ENCODE measurements at regions of chr11 and their contacts with region 1.

Region 1: GRCh38 chr11:59822989-59823566 is 12.5 kb upstream of the MRPL16 start:
- DNase-seq: no peak
- H3K4me3 ChIP-seq: peak overlapping the region in 1 of 2 donors; percentile 30
- H3K27ac ChIP-seq: peak overlapping the region in 1 of 2 donors; percentile 44
- H3K4me1 ChIP-seq: peaks cover 0 to 3% of the 10 kb centered on the region in 2 donors
- H3K27me3 ChIP-seq: no peaks in the 10 kb centered on the region
- CTCF ChIP-seq: peak; percentile 30 to 60 (median 57)

Region 2: DNA sequence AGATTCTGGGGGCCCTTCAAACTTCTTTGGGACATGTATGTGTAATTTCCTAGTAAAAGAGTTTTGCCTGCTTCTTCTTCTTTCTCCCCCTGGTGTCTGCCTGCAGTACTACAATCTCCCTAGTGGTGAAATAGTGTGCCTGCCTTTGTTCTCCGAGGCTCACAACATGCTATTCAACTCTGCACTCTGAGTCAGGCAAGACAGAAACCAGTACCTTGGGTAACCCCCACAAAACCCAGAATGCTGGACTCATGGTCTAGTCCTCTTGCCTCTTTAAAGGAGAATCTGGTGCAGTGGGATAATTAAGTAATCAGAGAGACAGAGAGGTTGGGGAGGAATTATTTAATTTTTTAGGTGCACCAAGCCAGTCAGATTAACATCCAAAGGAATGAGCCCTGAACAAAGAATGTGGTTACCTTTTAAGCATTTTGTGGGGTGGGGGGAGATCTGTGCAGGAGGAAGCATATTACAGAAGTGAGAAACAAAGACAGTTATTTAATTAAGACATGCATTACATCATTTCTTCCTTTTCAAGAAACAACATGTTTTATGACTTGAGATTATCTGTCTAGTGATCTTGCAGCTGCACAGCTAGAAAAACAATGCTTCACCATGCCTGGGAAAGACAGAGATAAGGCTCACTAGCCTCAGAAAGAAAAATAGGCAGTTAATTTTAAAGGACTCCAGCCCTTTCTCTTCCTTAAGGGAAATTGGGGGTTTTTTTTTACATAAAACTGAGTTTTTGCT is 370.8 kb after region 1 on chr11:
- intact Hi-C with region 1: loop called (anchors 10 kb)
- DNase-seq: peak in 1 of 2 donors; percentile 69
- H3K4me3 ChIP-seq: no peak overlapping the region
- H3K27ac ChIP-seq: no peak overlapping the region
- H3K4me1 ChIP-seq: no peaks in the 10 kb centered on the region
- H3K27me3 ChIP-seq: no peaks in the 10 kb centered on the region
- CTCF ChIP-seq: peak; percentile 48 to 61 (median 56)

Region 3: GRCh38 chr11:60251485-60252212 is 428.6 kb after region 1 on chr11:
- intact Hi-C with region 1: loop called (anchors 10 kb)
- DNase-seq: no peak
- H3K4me3 ChIP-seq: no peak overlapping the region
- H3K27ac ChIP-seq: no peak overlapping the region
- H3K4me1 ChIP-seq: no peaks in the 10 kb centered on the region
- H3K27me3 ChIP-seq: no peaks in the 10 kb centered on the region
- CTCF ChIP-seq: peak in 2 of 3 experiments; percentile 16 to 41

Measured in ascending aorta (tissue), 2 donors.